Aorta (tissue), 5 donors: ENCODE measurements at regions of chr3 and their contacts with region 1.

Region 1: GRCh38 chr3:62558549-62559112 is 185.3 kb upstream of the FEZF2 start:
- DNase-seq: no peak
- ATAC-seq: no peak
- H3K4me3 ChIP-seq: no peak overlapping the region
- H3K27ac ChIP-seq: no peak overlapping the region
- H3K4me1 ChIP-seq: peaks cover 0 to 3% of the 10 kb centered on the region in 2 donors
- H3K27me3 ChIP-seq: no peaks in the 10 kb centered on the region

Region 2: GRCh38 chr3:61251174-61251972 is 1307.3 kb before region 1 on chr3 and contains the start of gene FHIT:
- intact Hi-C with region 1: loop called in 1 of 2 experiments (anchors 5 kb)
- DNase-seq: peak; percentile 97 to 98
- ATAC-seq: peak; percentile 99
- H3K4me3 ChIP-seq: peak within 1 kb of the TSS; percentile 74 to 86
- H3K27ac ChIP-seq: no peak within 1 kb of the TSS
- H3K4me1 ChIP-seq: no peaks in the 10 kb centered on the region
- H3K27me3 ChIP-seq: no peaks in the 10 kb centered on the region
- total RNA-seq, gene FHIT: 4.9 to 9.2 TPM

Region 3: DNA sequence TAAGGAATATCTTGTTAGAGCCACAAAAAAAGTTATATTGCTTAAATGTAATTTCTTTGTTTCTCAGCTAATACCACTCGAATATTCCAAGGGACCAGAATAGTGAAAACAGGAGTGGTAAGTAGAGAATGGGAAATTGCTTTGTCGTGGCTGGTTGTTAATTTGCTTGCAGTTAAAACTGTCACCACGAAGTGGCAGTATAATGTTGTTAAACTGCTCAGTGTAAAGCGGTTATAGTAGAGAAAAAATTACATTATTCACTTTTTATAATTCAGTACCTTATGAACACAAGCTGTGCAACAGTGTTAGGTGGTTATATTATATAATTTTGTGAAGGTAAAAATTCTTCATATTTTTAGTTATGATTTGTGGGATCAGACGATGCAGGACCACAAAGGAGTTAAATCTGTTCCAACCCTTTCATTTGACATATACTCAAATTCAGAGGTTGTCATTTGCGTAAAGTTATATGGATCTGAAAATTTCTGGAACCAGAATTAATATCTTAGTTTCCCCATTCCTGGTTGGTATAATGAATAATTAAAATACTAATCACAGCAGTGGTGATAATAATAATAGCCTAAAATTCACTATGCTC is 357.1 kb before region 1 on chr3:
- intact Hi-C with region 1: loop called in 1 of 2 experiments (anchors 10 kb)
- DNase-seq: no peak
- ATAC-seq: no peak
- H3K4me3 ChIP-seq: no peak overlapping the region
- H3K27ac ChIP-seq: no peak overlapping the region
- H3K4me1 ChIP-seq: no peaks in the 10 kb centered on the region
- H3K27me3 ChIP-seq: no peaks in the 10 kb centered on the region

Region 4: DNA sequence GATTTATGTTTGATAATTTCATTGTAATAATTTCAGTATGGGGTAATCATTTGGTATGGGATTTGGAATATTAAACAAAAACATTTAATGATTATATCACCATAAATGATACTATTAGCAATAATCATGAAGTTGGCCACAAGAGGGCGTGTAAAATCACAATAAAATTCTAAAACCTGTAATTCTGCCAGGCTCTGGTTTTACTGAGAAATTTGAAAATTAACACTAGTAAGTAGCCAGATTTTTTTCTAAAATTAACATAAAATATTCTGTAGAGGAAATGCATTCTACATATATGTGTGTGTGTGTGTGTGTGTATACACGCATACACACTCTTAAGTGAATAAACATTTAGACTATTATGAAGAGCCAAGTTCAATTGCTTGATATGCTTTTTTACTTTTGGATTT is 225.8 kb before region 1 on chr3:
- intact Hi-C with region 1: loop called (anchors 2 to 5 kb)
- DNase-seq: no peak
- ATAC-seq: no peak
- H3K4me3 ChIP-seq: no peak overlapping the region
- H3K27ac ChIP-seq: no peak overlapping the region
- H3K4me1 ChIP-seq: no peaks in the 10 kb centered on the region
- H3K27me3 ChIP-seq: no peaks in the 10 kb centered on the region

Region 5: DNA sequence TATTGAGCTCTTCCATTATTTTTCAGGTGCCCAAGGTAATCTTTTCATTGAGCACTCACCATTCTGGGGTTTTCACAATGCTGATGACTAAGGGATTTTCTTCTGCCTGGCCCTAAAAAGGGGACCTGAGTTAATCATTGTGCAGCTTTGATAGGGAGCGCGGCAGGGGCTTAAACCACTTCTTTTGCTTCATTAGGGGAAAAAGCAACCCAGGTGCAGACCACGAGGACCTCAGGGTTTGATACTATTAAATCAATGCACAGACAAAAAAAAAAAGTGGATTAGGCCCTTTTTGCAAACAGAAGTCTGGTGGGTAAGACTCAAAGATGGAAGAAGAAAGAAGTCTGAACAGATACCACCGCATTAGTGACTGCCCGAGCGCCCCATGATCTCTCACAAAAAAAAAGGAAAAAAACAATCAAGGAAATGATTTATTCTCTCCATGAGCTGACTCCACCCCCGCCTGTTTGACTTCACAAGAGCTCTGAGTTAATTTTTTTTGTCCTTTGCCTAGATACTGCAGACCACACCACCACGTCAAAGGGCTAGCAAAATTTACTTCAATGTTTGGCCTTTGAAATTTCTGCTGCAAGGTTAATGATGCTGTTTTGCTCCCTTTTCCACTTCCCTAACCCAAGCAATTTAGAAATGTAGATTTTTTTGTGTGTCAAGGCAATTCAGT is 107.3 kb before region 1 on chr3:
- intact Hi-C with region 1: no loop called
- DNase-seq: no peak
- ATAC-seq: no peak
- H3K4me3 ChIP-seq: no peak overlapping the region
- H3K27ac ChIP-seq: no peak overlapping the region
- H3K4me1 ChIP-seq: no peaks in the 10 kb centered on the region
- H3K27me3 ChIP-seq: no peaks in the 10 kb centered on the region

Region 6: DNA sequence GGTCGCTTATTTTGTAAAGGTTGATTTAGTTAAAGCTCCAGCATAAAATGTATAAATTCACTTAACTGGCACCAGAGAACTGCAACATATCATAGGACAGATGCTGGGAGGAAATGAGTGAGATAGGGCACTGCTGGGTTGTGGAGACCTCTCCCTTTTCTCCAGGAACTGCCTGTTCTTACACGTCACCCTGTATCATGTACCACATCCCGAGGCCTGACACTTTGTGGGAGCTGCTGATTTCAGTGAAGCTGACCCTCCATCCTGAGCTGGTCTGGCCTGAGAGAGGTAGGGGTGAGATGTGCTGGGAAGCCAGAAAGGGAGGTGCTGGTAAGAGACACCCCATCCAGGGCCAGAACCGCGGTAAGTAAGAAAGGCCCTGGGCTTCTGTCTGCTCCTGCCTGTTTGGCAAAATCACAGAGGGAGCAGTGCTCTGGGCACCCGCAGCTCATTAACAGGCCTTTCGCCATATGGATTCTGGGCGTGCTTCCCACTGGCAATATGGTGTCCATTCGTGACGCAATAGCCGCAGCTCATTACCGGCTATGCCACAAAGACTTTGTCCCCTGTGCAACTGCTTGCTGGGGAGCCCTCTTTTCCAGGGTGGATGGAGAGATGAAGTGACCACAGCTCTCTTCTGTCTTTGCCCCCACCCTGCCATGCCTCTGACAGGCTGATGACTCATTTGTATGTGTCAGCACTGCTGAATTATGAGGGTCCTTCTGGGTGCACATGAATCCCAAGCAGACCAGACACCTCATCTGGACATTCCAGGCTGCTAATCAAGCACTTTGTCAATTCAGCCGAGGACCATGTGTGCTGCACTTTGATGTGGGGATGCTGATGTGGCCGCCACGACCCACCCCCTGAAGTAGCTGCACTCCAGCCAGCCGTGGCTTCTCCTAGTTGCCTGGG is 28.8 kb after region 1 on chr3:
- intact Hi-C with region 1: no loop called
- DNase-seq: no peak
- ATAC-seq: no peak
- H3K4me3 ChIP-seq: no peak overlapping the region
- H3K27ac ChIP-seq: no peak overlapping the region
- H3K4me1 ChIP-seq: no peaks in the 10 kb centered on the region
- H3K27me3 ChIP-seq: no peaks in the 10 kb centered on the region

Region 7: DNA sequence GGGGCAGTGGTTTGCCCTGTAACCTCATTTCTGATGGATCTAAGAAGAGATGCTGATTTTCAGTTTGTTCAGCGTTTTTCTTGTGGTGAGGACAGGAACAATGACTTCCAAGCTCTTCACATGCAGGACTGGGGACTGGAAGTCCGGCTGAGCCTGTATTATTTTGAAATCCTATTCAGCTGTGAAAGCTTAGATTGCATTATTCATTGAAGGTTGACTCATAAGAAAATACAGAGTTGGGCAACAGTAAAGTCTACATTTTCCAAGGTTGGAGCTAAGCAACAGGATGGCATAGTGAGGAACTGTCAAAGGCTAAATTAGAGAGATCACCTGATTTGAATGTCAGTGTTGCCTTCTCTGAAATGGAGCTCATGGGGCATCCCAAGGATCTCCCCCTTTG is 45.7 kb after region 1 on chr3:
- intact Hi-C with region 1: loop called in 1 of 2 experiments (anchors 2 kb)
- DNase-seq: no peak
- ATAC-seq: no peak
- H3K4me3 ChIP-seq: no peak overlapping the region
- H3K27ac ChIP-seq: peak overlapping the region in 1 of 2 donors; percentile 44
- H3K4me1 ChIP-seq: peaks cover 0 to 1% of the 10 kb centered on the region in 2 donors
- H3K27me3 ChIP-seq: no peaks in the 10 kb centered on the region